Left ventricle myocardium inferior (tissue), 1 donor: ENCODE measurements at regions of chr12 and their contacts with region 1.

Region 1: DNA sequence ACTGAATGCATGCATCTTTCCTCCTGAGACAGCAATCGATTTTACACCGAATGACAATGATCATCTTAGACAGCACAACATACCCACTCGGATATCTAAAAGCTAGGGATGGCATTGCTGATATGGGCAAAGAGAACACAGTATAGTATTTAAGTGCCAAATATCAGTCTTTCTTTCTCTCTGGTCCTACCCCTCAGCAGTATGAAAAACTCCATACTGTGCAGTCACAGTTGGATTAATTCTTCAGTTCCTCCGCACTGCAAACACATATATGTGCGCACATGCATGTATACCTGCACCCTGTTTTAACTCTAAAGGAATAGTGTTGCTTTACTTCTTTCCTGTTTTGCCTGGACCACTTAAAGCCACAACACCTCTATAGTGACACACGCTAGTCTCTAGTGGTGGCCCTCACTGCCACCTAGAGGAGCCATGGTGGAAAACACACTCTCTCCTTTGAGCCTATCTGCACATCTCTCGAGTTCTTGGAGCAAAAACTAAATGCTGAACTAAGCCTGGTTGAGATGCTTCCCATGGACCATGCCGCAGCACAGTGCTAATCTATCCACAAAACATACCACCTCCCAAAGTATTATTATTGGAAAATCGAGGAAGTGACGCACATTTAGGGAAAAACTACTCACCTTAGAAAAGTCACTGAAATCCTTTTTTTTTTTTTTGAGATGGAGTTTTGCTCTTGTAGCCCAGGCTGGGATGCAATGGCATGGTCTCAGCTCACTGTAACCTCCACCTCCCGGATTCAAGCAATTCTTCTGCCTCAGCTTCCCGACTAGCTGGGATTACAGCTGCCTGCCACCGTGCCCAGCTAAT is 11.9 kb downstream of the TMEM52B start:
- DNase-seq: peak; percentile 34
- H3K4me3 ChIP-seq: no peak overlapping the region
- H3K27ac ChIP-seq: no peak overlapping the region
- H3K4me1 ChIP-seq: peaks cover 13% of the 10 kb centered on the region
- H3K27me3 ChIP-seq: peaks cover 2% of the 10 kb centered on the region
- CTCF ChIP-seq: peak; percentile 82

Region 2: DNA sequence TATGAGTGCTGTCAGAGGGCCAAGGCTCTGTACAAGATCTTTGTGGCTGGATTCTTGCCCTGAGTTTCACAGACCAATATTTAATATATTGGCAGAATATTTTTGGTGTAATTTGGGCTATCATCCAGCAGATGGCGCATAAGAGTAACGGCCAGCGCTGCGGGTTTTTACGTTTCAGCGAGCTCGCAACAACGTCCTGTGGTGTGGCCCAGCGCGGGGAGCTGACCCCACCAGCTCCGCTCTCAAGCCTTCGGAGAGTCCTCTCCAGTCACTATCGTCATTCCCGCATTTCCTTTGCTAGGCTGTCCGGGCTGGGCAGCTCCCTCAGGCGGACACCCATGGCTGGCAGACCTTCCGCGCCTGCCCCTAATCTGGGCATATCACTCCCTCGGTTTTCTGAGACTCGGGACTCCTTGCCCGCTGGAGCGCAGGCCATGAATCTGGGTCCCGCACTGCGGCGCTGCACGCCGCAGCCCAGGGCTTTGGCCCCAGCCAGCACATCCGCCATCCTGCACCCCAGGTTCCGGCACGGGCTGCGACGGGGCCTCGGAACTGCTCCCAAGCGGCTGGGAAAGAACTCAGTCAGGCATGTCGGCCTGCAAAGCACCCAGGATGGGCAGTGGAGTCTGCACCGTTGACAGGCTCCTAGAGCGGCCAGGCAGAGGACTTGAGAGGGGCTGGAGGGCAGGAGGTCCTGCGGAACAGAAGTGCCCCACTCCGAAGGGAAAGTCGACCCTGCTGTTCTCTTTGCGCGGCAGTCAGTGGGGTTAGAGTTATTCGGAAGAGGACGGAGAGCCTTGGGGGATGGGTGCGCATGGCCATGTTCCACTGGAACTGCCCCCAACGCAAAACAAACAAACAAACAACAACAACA is 37.3 kb before region 1 on chr12:
- intact Hi-C with region 1: loop called (anchors 2 kb)
- DNase-seq: peak; percentile 61
- H3K4me3 ChIP-seq: peak overlapping the region; percentile 71
- H3K27ac ChIP-seq: peak overlapping the region; percentile 86
- H3K4me1 ChIP-seq: peaks cover 14% of the 10 kb centered on the region
- H3K27me3 ChIP-seq: no peaks in the 10 kb centered on the region
- CTCF ChIP-seq: peak; percentile 84